ENCODE measurements at regions of chr11 and their contacts with region 1.

Region 1: DNA sequence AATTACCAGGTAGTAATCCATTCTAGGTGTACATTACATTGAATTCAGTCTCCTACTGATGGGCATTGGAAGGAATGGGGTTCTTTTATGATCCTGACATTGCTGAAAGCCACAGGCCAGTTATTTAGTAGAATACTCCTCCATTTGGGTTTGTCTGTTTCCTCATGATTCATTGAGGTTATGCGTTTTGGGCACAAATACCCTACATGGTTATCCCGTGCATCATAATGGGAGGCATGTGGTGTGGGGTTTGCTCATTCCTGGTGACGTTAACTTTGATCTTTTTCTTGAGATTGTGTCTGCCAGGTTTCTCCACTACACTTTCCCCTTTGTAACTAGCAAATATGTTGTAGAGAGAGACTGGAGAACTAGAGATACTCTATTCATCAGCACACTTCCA is 5.5 kb downstream of the FOLR3 start:
- DNase-seq: no peak
- ATAC-seq: no peak
- H3K4me3 ChIP-seq: no peak overlapping the region
- H3K27ac ChIP-seq: no peak overlapping the region
- H3K4me1 ChIP-seq: peaks cover 0 to 12% (median 0%) of the 10 kb centered on the region in 9 donors
- H3K27me3 ChIP-seq: no peaks in the 10 kb centered on the region
- CTCF ChIP-seq: no peak

Region 2: GRCh38 chr11:71895961-71896360 is 245.1 kb before region 1 on chr11:
- intact Hi-C with region 1: no loop called
- DNase-seq: no peak
- ATAC-seq: no peak
- H3K4me3 ChIP-seq: no peak overlapping the region
- H3K27ac ChIP-seq: no peak overlapping the region
- H3K4me1 ChIP-seq: no peaks in the 10 kb centered on the region
- H3K27me3 ChIP-seq: no peaks in the 10 kb centered on the region
- CTCF ChIP-seq: no peak

Region 3: GRCh38 chr11:71977743-71978418 is 163.2 kb before region 1 on chr11:
- intact Hi-C with region 1: loop called in 3 of 10 experiments (anchors 5 kb)
- DNase-seq: peak in 1 of 2 donors; percentile 45
- ATAC-seq: peak in 6 of 8 donors; percentile 35 to 81 (median 68)
- H3K4me3 ChIP-seq: no peak overlapping the region
- H3K27ac ChIP-seq: peak overlapping the region in 1 of 10 donors; percentile 41
- H3K4me1 ChIP-seq: peaks cover 0 to 6% (median 0%) of the 10 kb centered on the region in 9 donors
- H3K27me3 ChIP-seq: no peaks in the 10 kb centered on the region
- CTCF ChIP-seq: peak; percentile 59 to 83 (median 74)

Region 4: GRCh38 chr11:72024069-72024754 is 116.9 kb before region 1 on chr11:
- intact Hi-C with region 1: loop called in 7 of 10 experiments (anchors 1 to 5 kb)
- DNase-seq: no peak
- ATAC-seq: no peak
- H3K4me3 ChIP-seq: no peak overlapping the region
- H3K27ac ChIP-seq: peak overlapping the region in 1 of 10 donors; percentile 27
- H3K4me1 ChIP-seq: peaks cover 3 to 53% (median 37%) of the 10 kb centered on the region in 9 donors
- H3K27me3 ChIP-seq: no peaks in the 10 kb centered on the region
- CTCF ChIP-seq: no peak

Region 5: DNA sequence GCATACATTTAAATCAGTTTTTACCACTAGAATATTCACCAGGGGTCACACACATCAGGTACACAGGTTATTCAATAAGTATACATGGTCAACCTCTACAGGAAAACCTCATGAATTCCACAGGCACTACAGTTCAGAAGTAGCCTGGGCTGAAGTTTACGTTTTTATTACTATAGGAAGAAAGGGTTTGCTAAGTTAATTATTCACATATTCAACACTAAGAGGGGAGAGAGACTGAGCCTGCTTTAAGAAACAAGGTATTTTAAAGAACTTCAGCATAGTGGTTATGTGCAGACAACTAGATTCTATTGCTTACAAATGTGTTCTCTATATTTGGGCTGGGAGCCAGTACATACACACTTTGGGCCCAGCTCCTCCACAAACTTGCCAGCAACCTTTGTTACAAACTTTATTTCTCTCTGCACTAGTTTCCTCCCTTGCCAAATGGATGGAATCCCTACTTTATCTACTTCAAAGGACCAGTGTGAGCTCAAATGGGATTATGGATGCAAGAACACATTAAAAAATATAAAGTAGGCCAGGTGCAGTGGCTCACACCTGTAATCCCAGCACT is 110.5 kb before region 1 on chr11:
- intact Hi-C with region 1: loop called in 6 of 10 experiments (anchors 1 to 5 kb)
- DNase-seq: no peak
- ATAC-seq: no peak
- H3K4me3 ChIP-seq: no peak overlapping the region
- H3K27ac ChIP-seq: no peak overlapping the region
- H3K4me1 ChIP-seq: peaks cover 5 to 95% (median 61%) of the 10 kb centered on the region in 9 donors
- H3K27me3 ChIP-seq: no peaks in the 10 kb centered on the region
- CTCF ChIP-seq: no peak

Region 6: GRCh38 chr11:72091005-72091691 is 49.9 kb before region 1 on chr11:
- intact Hi-C with region 1: loop called in 1 of 10 experiments (anchors 5 kb)
- DNase-seq: peak; percentile 55 to 80
- ATAC-seq: peak; percentile 87 to 94 (median 92)
- H3K4me3 ChIP-seq: no peak overlapping the region
- H3K27ac ChIP-seq: peak overlapping the region in 5 of 10 donors; percentile 28 to 67 (median 49)
- H3K4me1 ChIP-seq: peaks cover 0 to 22% (median 12%) of the 10 kb centered on the region in 9 donors
- H3K27me3 ChIP-seq: no peaks in the 10 kb centered on the region
- CTCF ChIP-seq: peak; percentile 71 to 95 (median 88)

Region 7: GRCh38 chr11:72160319-72160718 is 19.3 kb after region 1 on chr11:
- intact Hi-C with region 1: no loop called
- DNase-seq: no peak
- ATAC-seq: no peak
- H3K4me3 ChIP-seq: no peak overlapping the region
- H3K27ac ChIP-seq: no peak overlapping the region
- H3K4me1 ChIP-seq: no peaks in the 10 kb centered on the region
- H3K27me3 ChIP-seq: peaks cover 0 to 26% (median 22%) of the 10 kb centered on the region in 7 donors
- CTCF ChIP-seq: no peak

Region 8: DNA sequence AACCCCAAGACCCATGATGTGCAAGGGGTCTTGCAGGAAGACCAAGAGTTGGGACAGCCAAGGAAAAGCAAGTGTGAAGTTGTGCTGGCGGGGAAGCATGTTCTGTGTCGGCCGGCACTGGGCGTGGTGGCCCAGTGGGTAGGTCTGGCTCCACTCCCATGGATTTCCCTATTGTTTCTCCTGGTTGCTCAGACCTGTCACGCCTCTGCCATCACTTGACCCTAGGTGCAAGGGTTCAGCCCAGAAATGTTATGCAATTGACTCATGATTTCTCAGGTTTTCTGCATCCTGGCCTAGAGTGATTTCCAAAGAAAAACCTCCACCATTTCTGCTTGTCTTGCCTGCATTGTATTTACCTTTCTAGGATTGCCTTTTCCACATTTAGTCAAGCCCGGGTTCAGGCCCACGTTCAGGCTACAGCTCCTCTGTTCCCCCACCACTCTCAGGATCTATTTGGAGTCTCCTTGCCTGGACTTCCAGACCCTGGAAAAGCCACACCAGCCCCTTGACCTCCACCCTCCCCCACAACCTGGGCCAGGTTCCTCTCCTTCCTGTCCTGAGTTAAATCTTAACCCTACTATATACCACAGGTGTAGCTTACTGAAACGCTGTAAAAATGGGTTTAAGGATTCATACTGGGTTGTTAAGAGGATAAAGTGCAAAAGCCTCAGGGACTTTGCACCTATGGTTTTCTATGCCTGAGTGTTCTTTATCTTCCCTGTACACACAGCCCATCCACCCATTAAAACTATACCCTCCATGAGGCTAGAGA is 33.4 kb after region 1 on chr11:
- intact Hi-C with region 1: no loop called
- DNase-seq: no peak
- ATAC-seq: peak in 1 of 8 donors; percentile 37
- H3K4me3 ChIP-seq: no peak overlapping the region
- H3K27ac ChIP-seq: no peak overlapping the region
- H3K4me1 ChIP-seq: no peaks in the 10 kb centered on the region
- H3K27me3 ChIP-seq: peaks cover 0 to 6% (median 0%) of the 10 kb centered on the region in 7 donors
- CTCF ChIP-seq: no peak

Region 9: GRCh38 chr11:72772978-72773690 is 632.1 kb after region 1 on chr11:
- intact Hi-C with region 1: loop called in 1 of 10 experiments (anchors 5 kb)
- DNase-seq: peak in 1 of 2 donors; percentile 48
- ATAC-seq: peak; percentile 62 to 88 (median 82)
- H3K4me3 ChIP-seq: no peak overlapping the region
- H3K27ac ChIP-seq: peak overlapping the region in 6 of 10 donors; percentile 40 to 69 (median 50)
- H3K4me1 ChIP-seq: peaks cover 9 to 44% (median 36%) of the 10 kb centered on the region in 9 donors
- H3K27me3 ChIP-seq: no peaks in the 10 kb centered on the region
- CTCF ChIP-seq: no peak

Measured in heart right ventricle (tissue), 16 donors.